ENCODE measurements at regions of chr14 and their contacts with region 1.

Region 1: DNA sequence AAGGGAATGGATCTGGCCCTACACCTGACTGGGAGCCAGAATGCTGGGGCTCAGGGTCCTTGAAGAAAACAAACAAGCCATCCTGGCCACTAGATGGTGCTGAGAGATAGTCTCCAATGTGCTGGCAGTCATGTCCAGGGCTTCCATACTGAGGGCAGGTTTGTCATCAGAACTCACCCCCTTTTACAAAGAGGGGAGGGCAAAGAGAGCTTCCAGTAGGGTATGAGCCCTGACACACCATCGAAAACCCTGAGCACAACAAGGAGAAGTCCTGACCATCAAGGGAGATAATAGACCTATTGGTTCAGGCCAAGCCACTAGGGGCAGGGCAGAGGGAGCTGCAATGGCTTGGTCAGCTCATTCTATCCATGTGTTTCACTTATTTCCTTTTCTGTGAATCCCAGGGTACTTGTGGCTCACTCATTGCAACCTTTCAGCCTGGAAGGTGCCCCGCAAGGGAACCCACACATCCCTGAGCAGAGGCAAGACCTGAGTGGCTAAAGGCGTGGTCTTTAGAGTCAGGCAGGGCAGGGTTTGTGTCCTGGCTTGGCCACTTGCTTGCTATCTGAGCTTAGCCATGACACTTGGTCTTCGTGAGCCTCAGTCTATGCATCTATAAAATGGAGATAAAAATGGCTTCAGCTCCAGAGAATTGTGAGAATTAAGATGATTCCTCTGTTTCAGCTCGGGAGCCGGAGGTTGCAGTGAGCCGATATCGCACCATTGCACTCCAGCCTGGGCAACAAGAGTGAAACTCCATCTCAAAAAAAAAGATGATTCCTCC is 6.2 kb upstream of the PLEKHH1 start:
- DNase-seq: peak; percentile 49 to 68 (median 54)
- ATAC-seq: peak; percentile 94
- H3K4me3 ChIP-seq: no peak overlapping the region
- H3K27ac ChIP-seq: no peak overlapping the region
- H3K4me1 ChIP-seq: no peaks in the 10 kb centered on the region; a peak in 1 of 5 replicates
- H3K27me3 ChIP-seq: peaks cover 6 to 21% of the 10 kb centered on the region in 2 experiments; a peak in 3 of 5 replicates
- CTCF ChIP-seq: peak; percentile 75 to 90 (median 86)
- EP300 ChIP-seq: no peak
- POLR2A ChIP-seq: no peak
- RAD21 ChIP-seq: peak; percentile 63 to 84

Region 2: GRCh38 chr14:67557126-67557525 is 30.3 kb after region 1 on chr14:
- CTCF ChIA-PET with region 1: no interaction called
- POLR2A ChIA-PET with region 1: no interaction called
- in situ Hi-C with region 1: no loop called
- intact Hi-C with region 1: loop called (anchors 1 kb)
- DNase-seq: no peak
- ATAC-seq: no peak
- H3K4me3 ChIP-seq: no peak overlapping the region
- H3K27ac ChIP-seq: no peak overlapping the region
- H3K4me1 ChIP-seq: no peaks in the 10 kb centered on the region
- H3K27me3 ChIP-seq: no peaks in the 10 kb centered on the region
- CTCF ChIP-seq: no peak
- EP300 ChIP-seq: no peak
- POLR2A ChIP-seq: no peak
- RAD21 ChIP-seq: no peak

Region 3: GRCh38 chr14:67571272-67571850 is 44.5 kb after region 1 on chr14:
- CTCF ChIA-PET with region 1: interaction called, 5 read pairs
- POLR2A ChIA-PET with region 1: interaction called, 3 read pairs
- in situ Hi-C with region 1: loop called (anchors 5 kb)
- intact Hi-C with region 1: loop called (anchors 1 kb)
- DNase-seq: peak; percentile 54 to 64 (median 59)
- ATAC-seq: peak; percentile 95
- H3K4me3 ChIP-seq: no peak overlapping the region
- H3K27ac ChIP-seq: no peak overlapping the region
- H3K4me1 ChIP-seq: peaks cover 0 to 5% of the 10 kb centered on the region in 2 experiments; a peak in 2 of 5 replicates
- H3K27me3 ChIP-seq: no peaks in the 10 kb centered on the region
- CTCF ChIP-seq: peak; percentile 79 to 84 (median 83)
- EP300 ChIP-seq: no peak
- POLR2A ChIP-seq: no peak
- RAD21 ChIP-seq: peak; percentile 75 to 83